HAP-1 (cell line): ENCODE measurements at regions of chr2 and their contacts with region 1.

Region 1: DNA sequence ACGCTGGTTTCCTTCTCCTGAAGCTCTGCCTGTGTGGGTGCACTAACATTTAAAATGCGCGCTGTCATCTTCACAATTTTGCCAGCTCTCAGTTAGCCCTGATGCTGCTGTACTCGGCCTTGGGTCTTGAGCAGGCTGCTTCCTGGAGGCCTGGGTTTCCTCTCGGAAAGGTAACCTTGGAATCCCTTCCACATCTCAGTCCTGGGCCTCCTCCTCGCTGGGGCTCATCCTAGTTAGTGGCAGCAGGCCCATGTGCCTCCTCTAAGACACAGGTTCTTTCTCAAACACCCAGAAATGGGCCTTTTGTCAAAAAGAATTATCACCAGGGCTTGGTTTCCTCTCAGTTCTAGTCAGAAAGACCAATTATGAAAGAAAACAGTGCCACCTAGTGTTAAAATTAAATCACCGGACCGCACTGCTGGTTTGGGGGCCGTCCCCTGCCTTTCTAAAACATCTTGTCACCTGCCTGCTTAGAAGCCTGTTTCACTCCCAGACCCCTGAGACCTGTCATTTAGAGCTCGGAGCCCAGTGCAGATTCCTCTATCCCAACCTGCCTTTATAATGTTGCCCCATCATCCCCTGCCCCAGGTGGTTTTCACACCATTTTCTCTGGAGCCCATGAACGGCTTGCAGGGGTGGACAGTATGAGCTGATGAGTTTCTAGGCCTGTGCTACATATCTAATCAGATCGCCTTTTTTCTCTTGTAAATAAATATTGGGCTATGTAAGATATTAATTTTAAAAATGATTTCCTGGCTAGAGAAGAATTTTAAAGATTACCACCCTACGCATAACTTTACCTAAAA is 42.4 kb downstream of the HK2 start:
- DNase-seq: peak; percentile 48 to 54
- H3K4me3 ChIP-seq: no peak overlapping the region
- H3K4me1 ChIP-seq: no peaks in the 10 kb centered on the region
- H3K27me3 ChIP-seq: no peaks in the 10 kb centered on the region

Region 2: GRCh38 chr2:74696829-74697228 is 179.5 kb before region 1 on chr2:
- in situ Hi-C with region 1: loop called (anchors 5 kb)
- DNase-seq: no peak
- H3K4me3 ChIP-seq: no peak overlapping the region
- H3K4me1 ChIP-seq: no peaks in the 10 kb centered on the region
- H3K27me3 ChIP-seq: peaks cover 8% of the 10 kb centered on the region